Activated CD4-positive, alpha-beta T cell treated with anti-CD3 and anti-CD28 coated beads for 36 hours (primary cell): ENCODE measurements at regions of chr1 and their contacts with region 1.

Region 1: GRCh38 chr1:172532700-172533509 is at the start of gene SUCO:
- DNase-seq: peak; percentile 100
- ATAC-seq: peak; percentile 87
- H3K4me3 Mint-ChIP-seq: peak within 1 kb of the TSS; percentile 87
- H3K27ac Mint-ChIP-seq: peak within 1 kb of the TSS; percentile 100
- H3K4me1 Mint-ChIP-seq: peaks cover 42% of the 10 kb centered on the region
- H3K27me3 Mint-ChIP-seq: peaks cover 2% of the 10 kb centered on the region
- total RNA-seq, gene SUCO: 22.1 to 23.8 TPM

Region 2: DNA sequence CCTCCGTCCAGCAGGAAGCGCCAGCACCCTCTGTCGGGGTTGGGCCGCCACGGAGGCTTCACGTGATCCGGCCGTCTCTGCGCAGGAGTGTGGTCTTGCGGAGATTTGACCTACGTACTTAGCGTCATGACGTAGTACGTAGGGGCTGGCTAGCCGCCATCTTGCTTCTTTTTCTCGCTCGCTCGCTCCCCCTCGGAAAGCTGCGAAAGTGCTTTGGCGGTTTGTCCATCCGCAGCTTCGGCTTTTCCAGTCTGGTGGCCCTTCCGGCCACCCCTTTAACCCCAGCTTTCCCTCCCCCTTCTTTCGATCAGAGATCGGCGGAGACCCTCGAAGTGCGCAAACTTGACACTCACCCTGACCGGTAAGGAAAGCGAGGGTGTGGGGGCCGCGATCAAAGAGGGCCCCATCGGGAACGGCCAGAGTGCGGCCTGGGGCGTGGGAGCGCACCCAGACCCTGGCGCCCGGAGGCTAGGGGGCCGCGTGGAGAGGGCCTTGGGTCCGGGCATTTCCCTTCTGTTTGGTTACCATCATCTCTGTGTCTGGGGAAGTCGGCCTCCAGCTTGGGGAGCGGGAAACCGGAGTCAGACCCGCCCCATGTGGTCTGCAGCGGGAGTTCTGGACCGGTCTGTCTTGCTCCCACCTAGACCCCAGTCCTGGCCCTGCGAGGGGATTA is 1047.4 kb before region 1 on chr1 and contains the start of gene PRRC2C:
- CTCF ChIA-PET with region 1: interaction called, 4 read pairs
- POLR2A ChIA-PET with region 1: no interaction called
- intact Hi-C with region 1: loop called in 1 of 2 experiments (anchors 5 kb)
- DNase-seq: peak; percentile 97
- ATAC-seq: peak; percentile 90
- H3K4me3 Mint-ChIP-seq: peak within 1 kb of the TSS; percentile 82
- H3K27ac Mint-ChIP-seq: peak within 1 kb of the TSS; percentile 95
- H3K4me1 Mint-ChIP-seq: peaks cover 43% of the 10 kb centered on the region
- H3K27me3 Mint-ChIP-seq: no peaks in the 10 kb centered on the region
- total RNA-seq, gene PRRC2C: 233 to 351 TPM

Region 3: DNA sequence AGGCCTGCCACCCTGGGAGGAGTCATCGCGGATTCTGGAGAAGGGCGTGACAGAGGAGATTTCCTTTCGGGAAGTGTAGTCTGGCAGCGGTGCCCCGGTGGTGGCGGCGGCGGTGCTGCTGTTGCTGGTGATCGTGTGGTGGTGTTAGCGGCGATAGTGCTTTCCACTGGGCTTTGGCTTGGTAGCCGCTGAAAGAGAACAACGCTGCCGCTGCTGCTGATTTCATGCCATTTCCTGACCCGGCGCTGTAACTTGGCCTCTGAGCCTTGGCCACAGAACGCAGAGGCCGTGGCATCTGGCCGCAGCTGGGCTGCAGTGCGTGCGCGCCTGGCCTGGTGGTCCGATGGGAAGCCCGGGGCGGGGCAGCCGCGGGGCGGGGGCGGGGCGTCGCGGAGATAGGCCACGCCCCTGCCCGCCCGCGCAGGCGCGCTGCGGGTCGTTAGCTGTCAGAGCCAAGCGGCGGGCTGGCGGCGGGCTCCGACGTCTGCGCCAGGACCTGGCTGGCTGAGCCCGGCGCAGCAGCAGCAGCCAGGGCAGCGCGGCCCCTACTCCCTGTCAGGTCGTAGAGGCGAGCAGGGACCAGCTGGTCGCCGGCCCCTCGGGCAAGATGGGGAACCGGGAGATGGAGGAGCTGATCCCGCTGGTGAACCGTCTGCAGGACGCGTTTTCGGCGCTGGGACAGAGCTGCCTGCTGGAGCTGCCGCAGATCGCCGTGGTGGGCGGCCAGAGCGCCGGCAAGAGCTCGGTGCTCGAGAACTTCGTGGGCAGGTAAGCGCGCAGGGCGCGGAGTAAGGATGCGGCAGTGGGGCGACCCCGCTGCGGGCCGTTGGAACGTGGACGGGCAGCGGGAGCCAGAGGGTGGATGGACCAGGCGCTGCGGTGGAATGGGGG is 691.6 kb before region 1 on chr1 and contains the start of gene DNM3:
- CTCF ChIA-PET with region 1: no interaction called
- POLR2A ChIA-PET with region 1: no interaction called
- intact Hi-C with region 1: loop called in 1 of 2 experiments (anchors 1 kb)
- DNase-seq: peak; percentile 85
- ATAC-seq: peak; percentile 97
- H3K4me3 Mint-ChIP-seq: peak within 1 kb of the TSS; percentile 84
- H3K27ac Mint-ChIP-seq: peak within 1 kb of the TSS; percentile 77
- H3K4me1 Mint-ChIP-seq: peaks cover 14% of the 10 kb centered on the region
- H3K27me3 Mint-ChIP-seq: peaks cover 17% of the 10 kb centered on the region
- total RNA-seq, gene DNM3: 1.1 to 1.4 TPM

Region 4: GRCh38 chr1:172449585-172450534 is 83.0 kb before region 1 on chr1:
- CTCF ChIA-PET with region 1: interaction called, 4 read pairs
- POLR2A ChIA-PET with region 1: no interaction called
- intact Hi-C with region 1: loop called in 1 of 2 experiments (anchors 2 kb)
- DNase-seq: peak; percentile 57
- ATAC-seq: peak; percentile 78
- H3K4me3 Mint-ChIP-seq: no peak overlapping the region
- H3K27ac Mint-ChIP-seq: no peak overlapping the region
- H3K4me1 Mint-ChIP-seq: peaks cover 23% of the 10 kb centered on the region
- H3K27me3 Mint-ChIP-seq: no peaks in the 10 kb centered on the region

Region 5: DNA sequence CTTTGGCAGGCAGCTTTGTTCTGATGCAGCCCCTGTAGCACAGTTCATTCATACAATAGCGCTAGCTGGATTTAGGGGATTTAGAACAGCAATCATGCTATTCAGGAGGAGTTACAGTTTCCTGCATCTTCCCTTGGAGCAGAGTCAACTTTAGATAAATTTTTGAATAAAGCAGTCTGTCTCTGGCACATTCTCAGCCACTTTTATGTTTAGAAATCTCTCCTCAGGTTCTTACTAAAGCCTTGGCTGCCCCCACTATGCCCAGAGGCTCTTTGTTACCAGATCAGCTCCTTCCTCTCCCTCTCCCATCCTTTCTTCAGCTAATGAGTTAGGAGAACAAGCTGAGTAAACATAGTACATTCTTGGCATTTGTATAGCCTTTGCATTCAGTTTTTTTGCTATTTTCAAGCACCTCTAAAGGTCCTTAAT is 72.0 kb before region 1 on chr1:
- CTCF ChIA-PET with region 1: no interaction called
- POLR2A ChIA-PET with region 1: no interaction called
- intact Hi-C with region 1: no loop called
- DNase-seq: no peak
- ATAC-seq: no peak
- H3K4me3 Mint-ChIP-seq: no peak overlapping the region
- H3K27ac Mint-ChIP-seq: no peak overlapping the region
- H3K4me1 Mint-ChIP-seq: no peaks in the 10 kb centered on the region
- H3K27me3 Mint-ChIP-seq: peaks cover 3% of the 10 kb centered on the region

Region 6: GRCh38 chr1:172566196-172566997 is 33.5 kb after region 1 on chr1:
- CTCF ChIA-PET with region 1: no interaction called
- POLR2A ChIA-PET with region 1: no interaction called
- intact Hi-C with region 1: no loop called
- DNase-seq: peak; percentile 19
- ATAC-seq: peak; percentile 72
- H3K4me3 Mint-ChIP-seq: no peak overlapping the region
- H3K27ac Mint-ChIP-seq: peak overlapping the region; percentile 85
- H3K4me1 Mint-ChIP-seq: peaks cover 16% of the 10 kb centered on the region
- H3K27me3 Mint-ChIP-seq: no peaks in the 10 kb centered on the region

Region 7: DNA sequence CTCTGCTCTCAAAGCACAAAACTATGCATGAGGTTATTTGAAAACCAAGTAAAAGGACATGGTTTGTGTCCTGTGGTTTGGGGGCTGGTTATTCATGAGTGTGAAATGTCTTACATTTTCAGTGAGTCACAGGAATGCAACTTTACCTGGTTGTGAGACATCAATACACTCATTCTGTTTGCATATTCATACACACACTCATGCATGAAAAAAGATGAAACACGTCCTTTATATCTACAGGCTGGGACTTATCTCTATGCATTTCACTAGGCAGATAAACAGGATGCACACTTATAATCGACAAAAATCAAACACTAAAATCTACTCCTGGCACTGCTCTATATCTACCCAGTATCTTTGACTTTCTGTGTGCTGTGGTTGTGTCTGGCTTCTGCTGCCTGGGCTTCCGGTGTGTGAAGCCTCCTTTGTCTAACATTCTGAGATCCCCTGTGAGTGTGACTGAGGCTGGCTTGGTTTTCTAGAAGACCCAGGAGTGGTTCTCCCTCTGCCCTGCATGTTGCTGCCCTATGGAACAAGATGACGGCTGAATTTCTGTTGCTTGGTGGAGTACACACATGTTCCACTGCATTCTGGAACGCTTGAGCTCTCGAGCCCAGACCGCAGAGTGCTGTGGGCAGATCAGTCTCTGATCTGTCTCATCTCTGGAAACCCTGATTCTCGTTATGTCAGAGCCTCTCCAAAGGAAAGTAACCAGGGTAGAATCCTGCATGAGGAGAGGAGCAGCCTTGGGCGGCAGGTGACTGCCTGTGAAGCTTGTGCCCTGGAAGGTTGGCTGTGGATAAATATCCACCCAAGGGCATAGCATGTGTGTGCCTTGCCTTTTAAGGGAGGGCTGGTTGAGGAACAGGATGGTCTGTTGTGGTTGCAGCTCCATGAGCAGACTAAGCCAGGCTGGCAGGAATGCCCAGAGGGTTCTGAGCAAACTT is 106.3 kb after region 1 on chr1:
- CTCF ChIA-PET with region 1: interaction called, 4 read pairs
- POLR2A ChIA-PET with region 1: interaction called, 4 read pairs
- intact Hi-C with region 1: loop called (anchors 1 to 2 kb)
- DNase-seq: peak; percentile 91
- ATAC-seq: peak; percentile 83
- H3K4me3 Mint-ChIP-seq: peak overlapping the region; percentile 56
- H3K27ac Mint-ChIP-seq: peak overlapping the region; percentile 99
- H3K4me1 Mint-ChIP-seq: peaks cover 73% of the 10 kb centered on the region
- H3K27me3 Mint-ChIP-seq: peaks cover 22% of the 10 kb centered on the region

Region 8: DNA sequence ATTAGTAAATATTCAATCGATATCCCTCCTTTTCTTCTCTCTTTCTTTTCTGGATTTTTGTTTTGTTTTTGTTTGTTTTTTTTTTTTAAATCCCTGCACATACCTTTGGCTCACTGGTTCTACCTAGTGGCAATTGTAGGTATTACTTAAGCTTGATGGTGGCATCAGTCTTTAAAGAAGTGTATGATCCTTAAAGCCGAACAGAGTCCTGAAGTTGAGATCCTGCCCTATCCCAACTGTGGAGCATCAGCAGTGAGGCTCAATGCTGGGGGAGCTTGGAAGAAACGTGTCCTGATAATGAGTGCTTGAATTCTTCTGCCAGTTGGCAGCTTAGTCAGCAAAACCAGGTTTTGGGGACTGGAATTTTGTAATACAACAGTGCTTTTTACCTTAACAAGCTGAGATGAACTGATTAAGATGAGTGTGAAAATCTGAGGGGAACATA is 186.8 kb after region 1 on chr1:
- CTCF ChIA-PET with region 1: interaction called, 6 read pairs
- POLR2A ChIA-PET with region 1: no interaction called
- intact Hi-C with region 1: loop called (anchors 2 to 5 kb)
- DNase-seq: no peak
- ATAC-seq: peak; percentile 51
- H3K4me3 Mint-ChIP-seq: no peak overlapping the region
- H3K27ac Mint-ChIP-seq: no peak overlapping the region
- H3K4me1 Mint-ChIP-seq: peaks cover 35% of the 10 kb centered on the region
- H3K27me3 Mint-ChIP-seq: peaks cover 6% of the 10 kb centered on the region

Region 9: DNA sequence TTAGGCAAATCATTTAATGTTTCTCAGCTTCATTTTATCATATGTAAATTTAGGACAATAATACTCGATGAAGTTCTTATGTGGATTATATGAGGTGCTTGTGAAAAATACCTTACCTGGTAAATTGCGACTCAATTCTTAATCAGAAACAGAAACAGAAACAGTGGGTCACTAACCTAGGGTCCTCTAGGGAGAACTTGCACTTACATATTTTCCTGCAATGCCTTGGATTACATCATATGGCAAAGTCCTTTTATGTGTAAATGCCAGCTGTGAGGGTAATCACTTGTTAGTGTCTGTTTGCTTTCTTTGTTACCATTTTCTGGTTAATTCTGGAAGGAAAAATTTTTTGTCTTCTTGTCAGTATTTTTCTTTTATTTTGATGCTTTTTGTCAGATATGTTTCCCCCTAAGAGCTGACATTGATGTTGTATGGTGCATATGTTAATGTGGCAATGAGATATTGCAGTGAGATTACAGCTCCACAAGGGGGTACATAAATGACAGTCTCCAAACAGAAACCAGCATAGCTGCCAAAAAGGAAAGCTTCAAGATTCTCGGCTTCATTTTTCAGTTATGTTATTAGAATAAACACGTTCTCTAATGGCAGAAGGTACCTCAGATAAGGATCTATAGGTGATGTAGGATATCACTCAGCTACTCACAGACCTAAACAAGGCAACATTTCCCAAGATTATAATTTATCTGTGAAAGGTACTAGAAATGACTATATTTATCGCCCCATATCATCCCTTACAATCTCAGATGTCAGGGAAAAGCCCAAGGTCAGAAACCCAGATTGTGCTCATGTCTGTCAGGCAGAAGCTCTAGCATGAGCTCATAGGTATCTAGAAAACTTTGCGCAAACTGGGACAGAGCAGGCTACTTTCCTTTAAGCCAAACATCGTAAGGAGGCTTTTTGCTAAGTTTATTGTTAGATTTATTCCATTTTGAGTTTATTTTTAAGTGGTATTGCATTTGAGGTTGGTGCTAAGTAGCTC is 245.9 kb after region 1 on chr1:
- CTCF ChIA-PET with region 1: no interaction called
- POLR2A ChIA-PET with region 1: no interaction called
- intact Hi-C with region 1: no loop called
- DNase-seq: no peak
- ATAC-seq: peak; percentile 86
- H3K4me3 Mint-ChIP-seq: no peak overlapping the region
- H3K27ac Mint-ChIP-seq: peak overlapping the region; percentile 33
- H3K4me1 Mint-ChIP-seq: peaks cover 17% of the 10 kb centered on the region
- H3K27me3 Mint-ChIP-seq: peaks cover 5% of the 10 kb centered on the region

Region 10: GRCh38 chr1:173867753-173868265 is 1334.9 kb after region 1 on chr1 and contains the start of gene GAS5:
- CTCF ChIA-PET with region 1: no interaction called
- POLR2A ChIA-PET with region 1: no interaction called
- intact Hi-C with region 1: loop called in 1 of 2 experiments (anchors 1 kb)
- DNase-seq: peak; percentile 100
- ATAC-seq: peak; percentile 82
- H3K4me3 Mint-ChIP-seq: peak within 1 kb of the TSS; percentile 91
- H3K27ac Mint-ChIP-seq: peak within 1 kb of the TSS; percentile 97
- H3K4me1 Mint-ChIP-seq: peaks cover 57% of the 10 kb centered on the region
- H3K27me3 Mint-ChIP-seq: no peaks in the 10 kb centered on the region
- total RNA-seq, gene GAS5: 878 to 1,203 TPM